ENCODE measurements at regions of chr4 and their contacts with region 1.

Region 1: GRCh38 chr4:184538023-184538599 is 63.8 kb upstream of the IRF2 start:
- DNase-seq: peak; percentile 53
- H3K4me3 Mint-ChIP-seq: peak overlapping the region; percentile 85
- H3K27ac Mint-ChIP-seq: peak overlapping the region; percentile 87
- H3K4me1 Mint-ChIP-seq: peaks cover 61% of the 10 kb centered on the region
- H3K27me3 Mint-ChIP-seq: no peaks in the 10 kb centered on the region

Region 2: GRCh38 chr4:184528051-184528450 is 10.1 kb before region 1 on chr4:
- intact Hi-C with region 1: no loop called
- DNase-seq: no peak
- H3K4me3 Mint-ChIP-seq: no peak overlapping the region
- H3K27ac Mint-ChIP-seq: no peak overlapping the region
- H3K4me1 Mint-ChIP-seq: peaks cover 24% of the 10 kb centered on the region
- H3K27me3 Mint-ChIP-seq: no peaks in the 10 kb centered on the region

Region 3: GRCh38 chr4:184553896-184554295 is 15.8 kb after region 1 on chr4:
- intact Hi-C with region 1: loop called (anchors 2 kb)
- DNase-seq: no peak
- H3K4me3 Mint-ChIP-seq: no peak overlapping the region
- H3K27ac Mint-ChIP-seq: no peak overlapping the region
- H3K4me1 Mint-ChIP-seq: peaks cover 27% of the 10 kb centered on the region
- H3K27me3 Mint-ChIP-seq: no peaks in the 10 kb centered on the region

Region 4: DNA sequence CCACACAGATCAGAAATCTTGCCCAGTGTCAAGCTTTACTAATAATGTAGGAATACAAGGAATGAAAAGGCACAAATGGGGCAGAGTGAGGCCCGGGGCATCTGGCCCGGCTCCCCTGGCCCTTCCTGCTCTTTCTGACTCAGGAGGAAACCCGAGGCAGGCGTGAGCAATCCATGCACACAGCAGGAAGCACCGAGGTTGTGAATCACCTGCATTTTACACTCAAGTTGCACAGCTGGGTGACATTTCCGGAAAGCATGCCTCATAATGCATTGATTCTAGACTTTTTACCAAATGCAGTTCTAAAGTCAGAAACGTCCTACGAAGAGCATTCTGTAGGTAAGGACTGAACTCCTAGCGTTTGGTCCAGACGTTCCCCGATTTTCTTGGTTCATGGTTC is 150.3 kb after region 1 on chr4:
- intact Hi-C with region 1: no loop called
- DNase-seq: no peak
- H3K4me3 Mint-ChIP-seq: no peak overlapping the region
- H3K27ac Mint-ChIP-seq: no peak overlapping the region
- H3K4me1 Mint-ChIP-seq: peaks cover 22% of the 10 kb centered on the region
- H3K27me3 Mint-ChIP-seq: no peaks in the 10 kb centered on the region

Region 5: DNA sequence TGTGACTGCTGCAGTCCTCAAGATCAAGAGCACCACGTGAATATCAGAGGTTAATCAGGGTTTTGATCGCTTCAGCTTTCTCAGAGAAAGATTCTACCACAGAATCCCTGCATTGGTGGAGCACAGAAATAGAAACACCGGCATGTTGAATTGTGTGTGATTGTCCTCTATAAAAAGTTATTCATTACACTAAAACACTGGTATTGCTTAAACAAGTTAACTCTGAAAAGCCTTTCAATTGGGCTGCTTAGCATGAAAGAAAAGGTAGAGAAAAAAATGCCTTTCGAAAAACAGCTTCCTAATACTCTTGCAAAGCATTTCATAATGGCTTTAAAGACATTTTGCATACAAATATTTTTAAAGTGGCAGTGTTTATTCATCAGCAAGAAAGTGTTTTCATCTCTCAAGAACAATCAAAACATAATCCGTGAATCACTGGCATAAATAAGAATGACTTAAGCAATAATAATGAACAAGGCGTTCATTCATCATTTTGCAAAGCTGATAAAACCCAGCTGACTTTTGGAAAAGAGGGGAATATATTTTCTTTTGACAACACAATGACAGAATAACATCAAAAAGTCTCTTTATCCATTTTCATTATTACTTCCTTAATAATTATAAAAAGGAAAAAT is 541.3 kb after region 1 on chr4:
- intact Hi-C with region 1: no loop called
- DNase-seq: no peak
- H3K4me3 Mint-ChIP-seq: no peak overlapping the region
- H3K27ac Mint-ChIP-seq: no peak overlapping the region
- H3K4me1 Mint-ChIP-seq: no peaks in the 10 kb centered on the region
- H3K27me3 Mint-ChIP-seq: peaks cover 27% of the 10 kb centered on the region